ENCODE measurements at regions of chr5 and their contacts with region 1.

Region 1: GRCh38 chr5:42908509-42909488 is 97.1 kb upstream of the SELENOP start:
- DNase-seq: peak; percentile 93 to 96 (median 94)
- ATAC-seq: peak; percentile 94 to 95
- H3K4me3 ChIP-seq: peak overlapping the region; percentile 64
- H3K27ac ChIP-seq: no peak overlapping the region
- H3K4me1 ChIP-seq: no peaks in the 10 kb centered on the region
- H3K27me3 ChIP-seq: no peaks in the 10 kb centered on the region

Region 2: GRCh38 chr5:42970636-42971559 is 62.1 kb after region 1 on chr5:
- intact Hi-C with region 1: loop called in 1 of 4 experiments (anchors 10 kb)
- DNase-seq: peak in 2 of 3 donors; percentile 66 to 67
- ATAC-seq: no peak
- H3K4me3 ChIP-seq: no peak overlapping the region
- H3K27ac ChIP-seq: no peak overlapping the region
- H3K4me1 ChIP-seq: no peaks in the 10 kb centered on the region
- H3K27me3 ChIP-seq: no peaks in the 10 kb centered on the region

Region 3: GRCh38 chr5:43389679-43390329 is 481.0 kb after region 1 on chr5:
- intact Hi-C with region 1: loop called in 1 of 4 experiments (anchors 10 kb)
- DNase-seq: peak in 2 of 3 donors; percentile 53 to 56
- ATAC-seq: peak; percentile 91 to 93
- H3K4me3 ChIP-seq: no peak overlapping the region
- H3K27ac ChIP-seq: no peak overlapping the region
- H3K4me1 ChIP-seq: no peaks in the 10 kb centered on the region
- H3K27me3 ChIP-seq: no peaks in the 10 kb centered on the region

Measured in right cardiac atrium (tissue), 5 donors.